Panc1 (cell line): ENCODE measurements at regions of chrX and their contacts with region 1.

Region 1: GRCh38 chrX:154435277-154435676 is 1.7 kb upstream of the GDI1 start:
- DNase-seq: no peak
- ATAC-seq: no peak
- H3K4me3 ChIP-seq: no peak overlapping the region
- H3K27ac ChIP-seq: no peak overlapping the region
- H3K4me1 ChIP-seq: peaks cover 25% of the 10 kb centered on the region
- H3K27me3 ChIP-seq: no peaks in the 10 kb centered on the region
- CTCF ChIP-seq: no peak

Region 2: GRCh38 chrX:154403192-154403591 is 32.1 kb before region 1 on chrX:
- CTCF ChIA-PET with region 1: no interaction called
- POLR2A ChIA-PET with region 1: interaction called, 12 read pairs
- in situ Hi-C with region 1: no loop called
- intact Hi-C with region 1: no loop called
- DNase-seq: no peak
- ATAC-seq: peak; percentile 1; the same call in 1 of the 2 replicates
- H3K4me3 ChIP-seq: no peak overlapping the region
- H3K27ac ChIP-seq: no peak overlapping the region
- H3K4me1 ChIP-seq: peaks cover 30% of the 10 kb centered on the region
- H3K27me3 ChIP-seq: no peaks in the 10 kb centered on the region
- CTCF ChIP-seq: no peak